ENCODE measurements at regions of chr13 and their contacts with region 1.

Region 1: DNA sequence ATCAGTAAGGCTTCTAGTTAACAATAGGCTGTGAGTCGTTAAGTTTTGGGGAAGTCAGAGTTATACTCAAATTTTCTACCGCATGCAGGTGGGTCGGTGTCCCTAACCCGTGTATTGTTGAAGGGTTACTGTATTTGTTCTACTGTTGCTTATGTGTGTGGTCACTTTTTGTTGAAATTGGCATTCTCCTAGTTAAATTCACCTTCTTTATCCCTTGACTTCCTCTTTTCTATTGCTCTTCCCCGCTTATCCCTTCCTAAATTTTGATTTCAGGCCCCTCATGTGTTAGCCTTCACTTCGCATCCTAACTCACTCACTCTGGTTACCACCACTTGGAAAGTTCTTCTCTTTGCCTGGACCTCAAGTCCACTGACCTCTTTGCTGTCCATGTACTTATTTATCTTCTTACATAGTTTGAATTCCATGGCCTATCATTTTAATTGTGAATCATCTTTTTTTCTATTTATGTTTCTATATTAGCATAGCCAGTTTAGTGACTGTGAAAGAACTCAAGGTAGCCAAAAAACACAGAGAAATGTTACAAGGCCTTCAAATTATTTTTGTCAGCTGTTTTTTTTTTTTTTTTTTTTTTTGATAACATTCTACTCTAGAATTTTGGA is 52.9 kb downstream of the NDFIP2 start:
- DNase-seq: no peak
- ATAC-seq: no peak
- H3K4me3 ChIP-seq: no peak overlapping the region
- H3K27ac ChIP-seq: no peak overlapping the region
- H3K4me1 ChIP-seq: peaks cover 0 to 13% (median 2%) of the 10 kb centered on the region in 12 donors
- H3K27me3 ChIP-seq: no peaks in the 10 kb centered on the region
- CTCF ChIP-seq: no peak
- POLR2A ChIP-seq: no peak

Region 2: DNA sequence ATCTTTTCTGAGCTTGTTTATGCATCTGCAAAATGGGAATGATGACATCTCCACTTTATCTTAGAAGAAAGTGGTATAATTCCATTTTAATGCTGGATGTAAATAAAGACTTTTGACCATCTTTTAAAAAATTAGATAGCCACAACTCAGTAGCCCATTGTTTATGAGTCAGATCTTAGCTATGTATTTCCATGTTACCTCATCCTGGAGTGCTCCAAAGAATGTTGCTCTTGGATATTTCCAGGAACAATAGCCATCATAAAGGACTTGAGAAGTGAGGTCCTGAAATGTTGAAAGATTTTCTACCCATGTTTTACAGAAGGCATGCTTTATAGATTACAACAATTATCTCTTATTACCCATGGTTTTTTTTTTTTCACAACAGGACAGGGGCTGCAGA is 1386.0 kb before region 1 on chr13:
- intact Hi-C with region 1: loop called in 1 of 10 experiments (anchors 10 kb)
- DNase-seq: no peak
- ATAC-seq: no peak
- H3K4me3 ChIP-seq: no peak overlapping the region
- H3K27ac ChIP-seq: no peak overlapping the region
- H3K4me1 ChIP-seq: no peaks in the 10 kb centered on the region
- H3K27me3 ChIP-seq: no peaks in the 10 kb centered on the region
- CTCF ChIP-seq: no peak
- POLR2A ChIP-seq: no peak

Region 3: DNA sequence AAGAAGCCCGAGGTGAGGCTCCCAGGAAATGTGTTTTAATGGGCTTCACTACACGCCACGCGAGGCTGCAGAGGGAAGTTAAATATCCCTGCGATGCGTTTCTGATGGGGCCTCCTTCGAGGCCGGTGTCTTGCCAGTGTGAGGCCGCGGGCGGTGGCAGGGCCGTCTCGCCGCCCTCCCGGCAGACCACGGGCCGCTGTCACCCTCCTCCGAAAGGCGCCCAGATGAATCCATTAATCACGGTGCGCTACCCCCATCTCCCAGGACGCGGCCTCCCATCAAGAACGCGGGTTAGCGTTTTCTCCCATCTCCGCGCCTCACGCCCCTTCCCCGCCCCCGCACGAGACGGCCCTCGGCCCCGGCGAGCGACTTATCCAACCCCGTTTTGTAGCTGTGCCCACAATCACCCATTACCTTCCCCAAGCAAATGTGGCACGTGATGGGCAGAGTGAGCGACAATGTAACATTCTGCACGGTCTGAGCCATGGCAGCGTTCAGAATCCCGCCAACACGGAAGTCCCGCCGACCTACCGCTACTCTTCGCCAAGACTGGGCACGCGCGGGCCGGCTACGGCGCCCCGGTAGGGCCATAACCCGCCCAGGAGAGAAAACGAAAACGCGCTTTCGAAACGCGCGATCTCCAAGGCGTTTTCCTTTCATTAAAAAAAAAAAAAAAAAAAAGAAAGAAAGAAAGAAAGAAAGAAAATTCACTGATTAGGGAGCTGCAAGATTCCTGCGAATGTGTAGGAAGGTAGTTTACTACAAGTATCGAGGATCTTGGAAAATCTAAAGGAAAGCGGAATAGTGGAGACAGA is 875.0 kb before region 1 on chr13 and contains the start of gene OBI1:
- intact Hi-C with region 1: no loop called
- DNase-seq: peak; percentile 92 to 95 (median 93)
- ATAC-seq: peak; percentile 97 to 99 (median 98)
- H3K4me3 ChIP-seq: peak within 1 kb of the TSS; percentile 56 to 95 (median 85)
- H3K27ac ChIP-seq: peak within 1 kb of the TSS in 11 of 12 donors; percentile 55 to 86 (median 78)
- H3K4me1 ChIP-seq: peaks cover 0 to 33% (median 25%) of the 10 kb centered on the region in 12 donors
- H3K27me3 ChIP-seq: peaks cover 0 to 5% (median 0%) of the 10 kb centered on the region in 9 donors
- CTCF ChIP-seq: no peak
- POLR2A ChIP-seq: peak in 1 of 2 donors; percentile 39
- total RNA-seq, gene OBI1: 7.7 to 12.3 (median 10.0) TPM

Region 4: GRCh38 chr13:79451500-79451962 is 82.4 kb before region 1 on chr13:
- intact Hi-C with region 1: no loop called
- DNase-seq: peak in 1 of 5 donors; percentile 27
- ATAC-seq: no peak
- H3K4me3 ChIP-seq: no peak overlapping the region
- H3K27ac ChIP-seq: no peak overlapping the region
- H3K4me1 ChIP-seq: peaks cover 0 to 4% (median 0%) of the 10 kb centered on the region in 12 donors
- H3K27me3 ChIP-seq: no peaks in the 10 kb centered on the region
- CTCF ChIP-seq: no peak
- POLR2A ChIP-seq: no peak

Measured in heart left ventricle (tissue), 16 donors.